WTC11 (cell line): ENCODE measurements at regions of chr11 and their contacts with region 1.

Region 1: DNA sequence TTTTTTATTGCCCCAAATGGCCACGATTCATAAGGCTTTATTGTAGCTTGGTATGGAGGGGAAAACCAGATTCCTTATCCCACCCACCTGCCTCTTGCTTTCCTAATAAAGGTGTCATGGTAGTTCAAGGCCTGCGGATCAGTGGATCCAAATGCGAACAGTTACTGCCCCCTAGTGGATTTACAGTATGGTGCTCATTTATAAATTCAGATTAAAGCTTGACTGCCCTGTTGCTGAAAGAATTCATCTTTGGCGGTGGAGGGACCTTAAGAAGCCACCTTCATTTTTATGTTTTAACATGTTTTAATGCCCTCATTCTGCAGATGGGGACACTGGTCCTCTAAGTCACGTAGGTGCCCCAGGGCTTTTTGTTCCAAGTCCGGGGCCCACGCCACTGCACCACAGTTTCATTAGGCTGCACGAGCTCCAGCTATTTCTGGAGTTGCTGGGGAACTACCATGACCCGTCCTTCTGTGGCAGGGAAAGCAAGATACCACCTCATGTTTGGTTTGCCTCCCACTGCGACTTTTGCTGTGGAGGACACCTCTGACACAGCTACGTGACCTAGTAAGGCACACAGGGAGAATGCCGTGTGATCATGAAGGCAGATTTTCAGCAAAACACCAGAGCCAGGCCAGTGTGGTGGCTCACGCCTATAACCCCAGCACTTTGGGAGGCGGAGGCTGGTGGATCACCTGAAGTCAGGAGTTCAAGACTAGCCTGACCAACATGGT is 15.6 kb upstream of the INCENP start:
- DNase-seq: no peak
- ATAC-seq: peak; percentile 70
- H3K4me3 Mint-ChIP-seq: no peak overlapping the region
- H3K27ac Mint-ChIP-seq: no peak overlapping the region
- H3K4me1 Mint-ChIP-seq: peaks cover 14% of the 10 kb centered on the region
- H3K27me3 Mint-ChIP-seq: peaks cover 4% of the 10 kb centered on the region; the same call in 1 of the 2 replicates
- CTCF ChIP-seq: peak; percentile 62

Region 2: DNA sequence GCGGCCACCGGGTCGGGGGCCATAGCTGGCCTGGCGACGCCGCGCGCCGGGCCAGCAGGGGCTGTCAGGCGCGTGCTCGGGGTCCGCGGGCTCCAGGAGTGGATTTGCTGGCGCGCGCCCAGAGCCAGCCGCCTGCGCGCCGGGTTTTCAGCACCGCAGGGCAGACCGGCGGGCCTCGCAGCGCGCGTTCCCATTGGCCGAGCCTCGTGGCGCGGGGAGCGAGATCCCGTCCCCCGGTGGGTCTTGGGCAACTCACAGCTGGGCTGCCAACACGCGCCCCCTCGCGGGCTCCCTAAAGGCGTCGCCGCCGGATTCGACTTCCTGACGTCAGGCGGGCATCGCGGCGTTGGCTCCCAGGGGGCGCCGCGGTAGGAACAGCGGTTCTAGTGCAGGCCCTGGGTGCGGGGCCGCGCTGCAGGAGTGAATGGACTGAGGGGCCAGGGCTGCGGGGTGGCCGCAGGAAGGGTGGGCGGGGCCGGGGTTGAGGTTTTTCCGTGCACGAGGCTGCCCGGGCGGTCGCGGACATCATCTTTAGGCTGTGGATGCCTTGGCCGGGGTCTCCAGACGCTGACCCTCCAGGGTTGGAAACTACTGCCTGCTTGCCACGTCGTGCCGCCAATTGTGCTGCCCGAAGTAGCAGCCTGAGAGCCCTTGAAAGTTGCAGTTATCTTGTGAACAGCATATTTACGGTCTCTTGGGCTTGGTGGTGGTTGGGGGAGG is 291.3 kb before region 1 on chr11 and contains the start of gene FADS1:
- CTCF ChIA-PET with region 1: interaction called, 18 read pairs
- POLR2A ChIA-PET with region 1: interaction called, 4 read pairs
- DNase-seq: peak; percentile 90
- ATAC-seq: peak; percentile 32
- H3K4me3 Mint-ChIP-seq: peak within 1 kb of the TSS; percentile 94
- H3K27ac Mint-ChIP-seq: peak within 1 kb of the TSS; percentile 99
- H3K4me1 Mint-ChIP-seq: peaks cover 23% of the 10 kb centered on the region
- H3K27me3 Mint-ChIP-seq: no peaks in the 10 kb centered on the region; the same call in 1 of the 2 replicates
- CTCF ChIP-seq: no peak
- total RNA-seq, gene FADS1: 105 to 108 TPM (median 105 TPM) in 3 replicates

Region 3: GRCh38 chr11:61891331-61892084 is 216.7 kb before region 1 on chr11 and contains the start of gene FADS3:
- CTCF ChIA-PET with region 1: interaction called, 136 read pairs
- POLR2A ChIA-PET with region 1: no interaction called
- DNase-seq: peak; percentile 88
- ATAC-seq: peak; percentile 85
- H3K4me3 Mint-ChIP-seq: peak within 1 kb of the TSS; percentile 69
- H3K27ac Mint-ChIP-seq: no peak within 1 kb of the TSS
- H3K4me1 Mint-ChIP-seq: peaks cover 3% of the 10 kb centered on the region
- H3K27me3 Mint-ChIP-seq: 0 out of 2 replicates have a peak, but pooled peaks cover 4% of the 10 kb centered on the region
- CTCF ChIP-seq: no peak
- total RNA-seq, gene FADS3: 47.4 to 50.0 TPM (median 49.3 TPM) in 3 replicates

Region 4: DNA sequence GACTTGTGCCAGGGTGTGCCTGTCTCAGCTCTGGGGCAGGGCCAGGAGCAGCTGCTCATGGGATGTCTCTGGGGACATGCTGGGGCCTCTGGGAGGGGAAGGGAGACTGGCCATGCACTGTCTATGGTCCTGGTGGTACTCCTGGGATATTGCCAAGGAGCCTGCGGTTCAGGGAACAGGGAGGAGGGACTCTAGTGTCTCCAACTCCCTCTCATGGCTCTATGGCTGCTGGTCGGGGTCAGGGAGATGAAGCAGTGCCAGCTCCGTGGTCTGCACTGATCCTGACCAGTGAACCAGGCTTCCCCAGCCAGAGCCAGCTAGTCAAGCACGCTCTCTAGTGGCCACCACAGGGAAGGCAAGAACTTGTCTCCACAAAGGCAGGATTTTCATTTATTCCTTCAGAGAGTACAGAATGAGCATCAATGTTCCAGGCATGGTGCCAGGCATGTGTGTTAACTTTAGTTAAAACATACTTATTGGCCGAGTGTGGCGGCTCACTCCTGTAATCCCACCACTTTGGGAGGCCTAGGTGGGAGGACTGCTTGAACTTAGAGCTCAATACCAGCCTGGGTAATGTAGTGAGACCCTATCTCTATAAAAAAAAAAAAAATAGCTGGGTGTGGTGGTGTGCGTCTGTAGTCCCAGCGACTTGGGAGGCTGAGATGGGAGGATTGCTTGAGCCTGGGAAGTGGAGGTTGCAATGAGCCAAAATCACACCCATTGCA is 160.5 kb before region 1 on chr11:
- CTCF ChIA-PET with region 1: interaction called, 116 read pairs
- POLR2A ChIA-PET with region 1: no interaction called
- DNase-seq: peak; percentile 89
- ATAC-seq: peak; percentile 93
- H3K4me3 Mint-ChIP-seq: no peak overlapping the region
- H3K27ac Mint-ChIP-seq: no peak overlapping the region
- H3K4me1 Mint-ChIP-seq: peaks cover 7% of the 10 kb centered on the region
- H3K27me3 Mint-ChIP-seq: peaks cover 3% of the 10 kb centered on the region
- CTCF ChIP-seq: peak; percentile 83

Region 5: GRCh38 chr11:62123669-62124185 is 15.5 kb after region 1 on chr11 and contains the start of gene INCENP:
- CTCF ChIA-PET with region 1: interaction called, 15 read pairs
- POLR2A ChIA-PET with region 1: interaction called, 3 read pairs
- DNase-seq: peak; percentile 95
- ATAC-seq: peak; percentile 98
- H3K4me3 Mint-ChIP-seq: peak within 1 kb of the TSS; percentile 97
- H3K27ac Mint-ChIP-seq: peak within 1 kb of the TSS; percentile 70
- H3K4me1 Mint-ChIP-seq: peaks cover 27% of the 10 kb centered on the region
- H3K27me3 Mint-ChIP-seq: no peaks in the 10 kb centered on the region
- CTCF ChIP-seq: no peak
- total RNA-seq, gene INCENP: 125 to 158 TPM (median 126 TPM) in 3 replicates